ENCODE measurements at regions of chr15 and their contacts with region 1.

Region 1: GRCh38 chr15:60444289-60444912 is 34.5 kb downstream of the ICE2 start:
- DNase-seq: no peak
- ATAC-seq: no peak
- H3K4me3 ChIP-seq: no peak overlapping the region
- H3K27ac ChIP-seq: no peak overlapping the region
- H3K4me1 ChIP-seq: peaks cover 14% of the 10 kb centered on the region
- H3K27me3 ChIP-seq: no peaks in the 10 kb centered on the region
- CTCF ChIP-seq: peak; percentile 64; the same call in 1 of the 2 replicates

Region 2: GRCh38 chr15:60340207-60340921 is 104.0 kb before region 1 on chr15:
- CTCF ChIA-PET with region 1: interaction called, 10 read pairs
- POLR2A ChIA-PET with region 1: no interaction called
- in situ Hi-C with region 1: no loop called
- intact Hi-C with region 1: no loop called
- DNase-seq: no peak
- ATAC-seq: no peak
- H3K4me3 ChIP-seq: no peak overlapping the region
- H3K27ac ChIP-seq: no peak overlapping the region
- H3K4me1 ChIP-seq: peaks cover 22% of the 10 kb centered on the region
- H3K27me3 ChIP-seq: no peaks in the 10 kb centered on the region
- CTCF ChIP-seq: peak; percentile 19; the same call in 1 of the 2 replicates

Region 3: GRCh38 chr15:60362321-60363086 is 81.9 kb before region 1 on chr15:
- CTCF ChIA-PET with region 1: no interaction called
- POLR2A ChIA-PET with region 1: no interaction called
- in situ Hi-C with region 1: loop called (anchors 5 kb)
- intact Hi-C with region 1: loop called (anchors 10 kb)
- DNase-seq: peak; percentile 88
- ATAC-seq: peak; percentile 47
- H3K4me3 ChIP-seq: no peak overlapping the region
- H3K27ac ChIP-seq: peak overlapping the region; percentile 100
- H3K4me1 ChIP-seq: peaks cover 77% of the 10 kb centered on the region
- H3K27me3 ChIP-seq: no peaks in the 10 kb centered on the region
- CTCF ChIP-seq: no peak

Region 4: DNA sequence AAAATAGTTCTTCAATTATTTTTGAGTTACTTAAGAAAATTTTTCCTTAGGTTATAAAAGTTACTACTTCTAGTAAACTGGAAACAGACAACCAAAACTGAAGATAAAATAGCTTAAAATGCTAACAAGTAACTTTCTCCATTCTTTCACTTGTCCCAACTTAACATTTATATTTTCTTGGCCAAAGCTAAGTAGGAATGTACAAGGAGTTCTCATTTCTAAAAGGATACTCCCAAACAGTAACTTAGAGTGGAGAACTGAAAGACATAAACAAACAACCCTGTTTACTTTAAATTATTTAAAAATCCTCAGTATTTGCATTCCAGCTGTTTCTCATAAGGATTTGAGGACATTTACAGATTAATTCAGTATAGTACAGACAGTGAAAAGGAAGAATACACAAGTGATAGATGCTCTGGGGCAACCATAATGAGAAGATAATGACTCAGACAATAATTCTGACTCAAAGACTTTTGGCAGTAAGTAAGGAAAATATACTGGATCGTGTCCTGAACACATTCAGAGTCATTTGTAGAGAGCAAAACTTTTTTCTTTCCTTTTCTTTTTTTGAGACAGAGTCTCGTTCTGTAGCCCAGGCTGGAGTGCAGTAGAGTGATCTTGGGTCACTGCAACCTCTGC is 17.4 kb before region 1 on chr15:
- CTCF ChIA-PET with region 1: no interaction called
- POLR2A ChIA-PET with region 1: interaction called, 18 read pairs
- in situ Hi-C with region 1: no loop called
- intact Hi-C with region 1: no loop called
- DNase-seq: no peak
- ATAC-seq: peak; percentile 60; the same call in 1 of the 2 replicates
- H3K4me3 ChIP-seq: no peak overlapping the region
- H3K27ac ChIP-seq: no peak overlapping the region
- H3K4me1 ChIP-seq: no peaks in the 10 kb centered on the region
- H3K27me3 ChIP-seq: no peaks in the 10 kb centered on the region
- CTCF ChIP-seq: no peak